Activated CD8-positive, alpha-beta T cell treated with anti-CD3 and anti-CD28 coated beads, Interleukin-2, amount 10 ng/mL, durations not matched to agents 7 days and 5 days (primary cell): ENCODE measurements at regions of chr6 and their contacts with region 1.

Region 1: DNA sequence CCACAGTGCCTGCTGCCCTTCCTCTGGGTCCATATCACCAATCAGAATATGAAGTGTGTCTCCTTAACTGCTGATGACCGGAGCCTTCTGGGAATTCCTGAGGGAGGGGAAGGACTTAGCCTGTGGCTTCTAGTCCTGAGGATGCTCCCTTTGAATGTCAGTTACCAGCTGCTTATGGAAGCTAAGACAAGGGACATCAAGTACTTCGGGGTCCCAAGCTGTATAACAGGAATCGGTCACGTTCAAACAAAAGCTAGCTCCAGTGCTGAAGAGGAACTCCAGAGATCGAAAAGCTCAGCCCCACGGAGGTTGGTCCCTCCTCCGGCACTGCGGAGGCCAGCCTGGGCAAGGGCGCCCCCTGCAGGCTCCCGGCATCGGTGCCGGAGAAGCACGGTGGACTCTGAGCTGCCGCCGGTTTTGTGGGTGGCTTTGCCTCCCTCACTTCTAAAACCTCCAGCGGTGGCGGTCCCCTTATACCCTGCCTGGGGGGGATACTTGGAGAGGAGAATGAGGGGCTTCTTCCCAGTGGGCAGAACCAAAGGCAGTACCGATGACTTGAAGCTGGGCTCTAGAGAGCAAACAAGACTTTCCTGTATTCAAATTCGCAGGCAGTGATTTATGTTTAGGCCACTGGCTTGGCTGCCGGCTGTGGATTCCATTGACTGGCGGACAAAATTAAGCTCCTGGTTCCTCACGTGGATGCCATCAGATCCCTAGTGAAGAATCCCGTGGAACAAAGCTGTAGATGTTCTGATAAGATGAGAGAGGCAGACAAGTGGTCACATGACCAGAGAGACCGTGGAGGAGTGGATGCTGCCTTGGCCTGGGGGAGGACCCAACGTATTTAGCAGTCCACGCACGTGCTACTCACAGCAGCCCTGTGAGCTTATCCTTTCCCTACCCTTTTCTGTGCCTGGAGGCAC is 16.2 kb upstream of the UBR2 start:
- DNase-seq: peak; percentile 90
- ATAC-seq: peak; percentile 100
- H3K4me3 Mint-ChIP-seq: peak overlapping the region; percentile 57
- H3K27ac Mint-ChIP-seq: no peak overlapping the region
- H3K4me1 Mint-ChIP-seq: peaks cover 13% of the 10 kb centered on the region
- H3K27me3 Mint-ChIP-seq: peaks cover 12% of the 10 kb centered on the region

Region 2: GRCh38 chr6:42104095-42104806 is 443.4 kb before region 1 on chr6:
- CTCF ChIA-PET with region 1: interaction called, 19 read pairs
- POLR2A ChIA-PET with region 1: no interaction called
- DNase-seq: peak; percentile 82
- ATAC-seq: peak; percentile 94
- H3K4me3 Mint-ChIP-seq: peak overlapping the region; percentile 65
- H3K27ac Mint-ChIP-seq: peak overlapping the region; percentile 74
- H3K4me1 Mint-ChIP-seq: peaks cover 30% of the 10 kb centered on the region
- H3K27me3 Mint-ChIP-seq: peaks cover 2% of the 10 kb centered on the region

Region 3: GRCh38 chr6:42269553-42269952 is 278.1 kb before region 1 on chr6:
- CTCF ChIA-PET with region 1: interaction called, 14 read pairs
- POLR2A ChIA-PET with region 1: no interaction called
- DNase-seq: peak; percentile 81
- ATAC-seq: peak; percentile 87
- H3K4me3 Mint-ChIP-seq: peak overlapping the region; percentile 23
- H3K27ac Mint-ChIP-seq: peak overlapping the region; percentile 77
- H3K4me1 Mint-ChIP-seq: peaks cover 24% of the 10 kb centered on the region
- H3K27me3 Mint-ChIP-seq: no peaks in the 10 kb centered on the region

Region 4: GRCh38 chr6:42378125-42378524 is 169.5 kb before region 1 on chr6:
- CTCF ChIA-PET with region 1: interaction called, 13 read pairs
- POLR2A ChIA-PET with region 1: interaction called, 3 read pairs
- DNase-seq: peak; percentile 57
- ATAC-seq: peak; percentile 86
- H3K4me3 Mint-ChIP-seq: peak overlapping the region; percentile 66
- H3K27ac Mint-ChIP-seq: peak overlapping the region; percentile 86
- H3K4me1 Mint-ChIP-seq: peaks cover 63% of the 10 kb centered on the region
- H3K27me3 Mint-ChIP-seq: no peaks in the 10 kb centered on the region

Region 5: DNA sequence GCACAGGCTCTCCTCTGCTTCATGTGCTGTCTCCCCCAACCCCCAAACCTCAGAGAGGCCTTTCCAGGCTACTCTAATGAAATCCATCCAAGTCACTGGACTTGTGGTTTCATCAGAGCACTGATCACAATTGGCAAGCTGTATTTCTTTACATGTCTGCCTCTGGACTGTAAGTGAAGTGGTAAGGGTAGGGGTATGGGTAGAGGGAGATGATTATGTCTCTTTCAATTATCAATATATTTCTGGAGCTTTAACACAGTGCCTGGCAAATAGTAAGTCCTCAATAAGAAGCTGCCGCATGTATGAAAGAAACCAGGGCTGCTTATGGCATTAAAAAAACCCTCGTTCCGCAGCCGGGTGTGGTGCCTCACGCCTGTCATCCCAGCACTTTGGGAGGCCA is 101.3 kb before region 1 on chr6:
- CTCF ChIA-PET with region 1: interaction called, 21 read pairs
- POLR2A ChIA-PET with region 1: no interaction called
- DNase-seq: no peak
- ATAC-seq: no peak
- H3K4me3 Mint-ChIP-seq: no peak overlapping the region
- H3K27ac Mint-ChIP-seq: no peak overlapping the region
- H3K4me1 Mint-ChIP-seq: peaks cover 50% of the 10 kb centered on the region
- H3K27me3 Mint-ChIP-seq: no peaks in the 10 kb centered on the region

Region 6: DNA sequence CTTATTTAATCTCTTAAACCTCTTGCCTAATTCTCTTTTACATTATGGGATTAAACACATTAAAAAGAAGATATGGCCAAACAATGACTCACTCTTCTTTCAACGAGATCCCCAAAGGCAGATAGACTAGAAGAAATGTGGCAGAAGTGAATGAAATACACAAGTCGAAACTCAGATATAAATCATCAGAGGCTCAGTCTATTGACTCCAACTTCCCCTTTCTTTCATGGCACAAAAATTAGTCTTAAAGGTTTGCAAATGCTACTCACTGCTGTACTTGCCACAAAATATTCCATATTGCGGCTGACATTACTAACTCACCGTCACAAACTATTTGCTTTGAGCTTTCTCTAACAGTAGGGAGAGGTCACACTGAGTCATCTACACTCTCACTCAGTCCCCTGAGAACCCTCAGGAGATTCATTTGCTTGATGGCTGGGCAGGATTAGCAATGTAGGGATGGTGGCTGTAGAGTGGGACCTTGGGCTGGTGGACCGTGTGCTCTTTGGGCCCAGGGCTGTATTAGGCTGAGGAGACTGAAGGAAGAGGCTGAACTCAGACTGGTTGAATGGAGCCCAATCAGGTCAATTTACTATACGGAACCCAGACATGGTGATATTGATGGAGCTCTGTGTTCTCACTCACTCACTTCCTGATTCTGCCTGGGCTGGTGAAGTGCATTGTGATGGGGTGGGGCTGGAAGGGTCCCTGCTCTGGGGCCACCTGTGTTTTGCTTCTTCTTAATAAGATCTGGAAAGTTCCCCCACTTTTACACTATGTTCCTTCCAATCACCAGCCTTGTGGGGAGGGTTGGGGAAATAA is 26.7 kb before region 1 on chr6:
- CTCF ChIA-PET with region 1: interaction called, 19 read pairs
- POLR2A ChIA-PET with region 1: no interaction called
- DNase-seq: no peak
- ATAC-seq: no peak
- H3K4me3 Mint-ChIP-seq: no peak overlapping the region
- H3K27ac Mint-ChIP-seq: no peak overlapping the region
- H3K4me1 Mint-ChIP-seq: no peaks in the 10 kb centered on the region
- H3K27me3 Mint-ChIP-seq: no peaks in the 10 kb centered on the region